Heart left ventricle (tissue), 16 donors: ENCODE measurements at regions of chr7 and their contacts with region 1.

Region 1: GRCh38 chr7:157336383-157337315 is at the start of gene DNAJB6:
- DNase-seq: peak; percentile 94 to 98 (median 95)
- ATAC-seq: peak; percentile 76 to 92 (median 88)
- H3K4me3 ChIP-seq: peak within 1 kb of the TSS; percentile 46 to 99 (median 81)
- H3K27ac ChIP-seq: peak within 1 kb of the TSS; percentile 88 to 100 (median 97)
- H3K4me1 ChIP-seq: peaks cover 7 to 49% (median 32%) of the 10 kb centered on the region in 12 donors
- H3K27me3 ChIP-seq: no peaks in the 10 kb centered on the region
- CTCF ChIP-seq: no peak
- POLR2A ChIP-seq: peak; percentile 78 to 95
- total RNA-seq, gene DNAJB6: 123 to 195 (median 162) TPM

Region 2: DNA sequence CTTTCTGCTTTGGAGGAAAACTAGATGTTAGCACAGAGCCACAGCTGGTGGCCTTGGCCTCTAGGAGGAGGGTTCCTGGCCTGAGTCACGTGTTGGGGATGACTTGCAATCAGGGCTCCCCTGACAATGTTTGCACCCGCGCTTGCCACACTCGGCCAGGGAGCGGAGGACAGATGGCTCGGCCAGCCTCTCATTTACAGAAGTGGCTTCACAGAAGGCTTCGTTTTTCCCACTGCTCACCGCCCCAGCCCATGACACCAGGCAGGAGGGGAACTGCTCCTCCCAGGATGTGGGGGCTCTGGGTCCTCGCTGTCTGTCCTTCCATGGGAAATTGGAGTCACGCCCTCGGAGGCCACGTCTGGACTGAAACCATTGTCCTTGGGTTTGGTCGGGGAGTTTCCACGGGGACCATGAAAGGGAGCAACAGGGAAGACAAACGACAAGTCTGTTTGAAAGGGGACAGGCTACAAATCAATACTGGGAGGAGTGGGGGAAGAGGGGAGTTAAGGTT is 247.5 kb before region 1 on chr7:
- intact Hi-C with region 1: no loop called
- DNase-seq: no peak
- ATAC-seq: no peak
- H3K4me3 ChIP-seq: no peak overlapping the region
- H3K27ac ChIP-seq: no peak overlapping the region
- H3K4me1 ChIP-seq: no peaks in the 10 kb centered on the region
- H3K27me3 ChIP-seq: peaks cover 0 to 9% (median 0%) of the 10 kb centered on the region in 9 donors
- CTCF ChIP-seq: no peak
- POLR2A ChIP-seq: no peak

Region 3: GRCh38 chr7:157139810-157140510 is 196.7 kb before region 1 on chr7:
- intact Hi-C with region 1: loop called in 1 of 10 experiments (anchors 10 kb)
- DNase-seq: no peak
- ATAC-seq: no peak
- H3K4me3 ChIP-seq: peak overlapping the region; percentile 60 to 97 (median 78)
- H3K27ac ChIP-seq: peak overlapping the region; percentile 85 to 96 (median 92)
- H3K4me1 ChIP-seq: peaks cover 10 to 60% (median 32%) of the 10 kb centered on the region in 12 donors
- H3K27me3 ChIP-seq: no peaks in the 10 kb centered on the region
- CTCF ChIP-seq: no peak
- POLR2A ChIP-seq: no peak

Region 4: GRCh38 chr7:157165987-157166386 is 170.7 kb before region 1 on chr7:
- intact Hi-C with region 1: no loop called
- DNase-seq: no peak
- ATAC-seq: no peak
- H3K4me3 ChIP-seq: no peak overlapping the region
- H3K27ac ChIP-seq: no peak overlapping the region
- H3K4me1 ChIP-seq: no peaks in the 10 kb centered on the region
- H3K27me3 ChIP-seq: no peaks in the 10 kb centered on the region
- CTCF ChIP-seq: no peak
- POLR2A ChIP-seq: no peak

Region 5: DNA sequence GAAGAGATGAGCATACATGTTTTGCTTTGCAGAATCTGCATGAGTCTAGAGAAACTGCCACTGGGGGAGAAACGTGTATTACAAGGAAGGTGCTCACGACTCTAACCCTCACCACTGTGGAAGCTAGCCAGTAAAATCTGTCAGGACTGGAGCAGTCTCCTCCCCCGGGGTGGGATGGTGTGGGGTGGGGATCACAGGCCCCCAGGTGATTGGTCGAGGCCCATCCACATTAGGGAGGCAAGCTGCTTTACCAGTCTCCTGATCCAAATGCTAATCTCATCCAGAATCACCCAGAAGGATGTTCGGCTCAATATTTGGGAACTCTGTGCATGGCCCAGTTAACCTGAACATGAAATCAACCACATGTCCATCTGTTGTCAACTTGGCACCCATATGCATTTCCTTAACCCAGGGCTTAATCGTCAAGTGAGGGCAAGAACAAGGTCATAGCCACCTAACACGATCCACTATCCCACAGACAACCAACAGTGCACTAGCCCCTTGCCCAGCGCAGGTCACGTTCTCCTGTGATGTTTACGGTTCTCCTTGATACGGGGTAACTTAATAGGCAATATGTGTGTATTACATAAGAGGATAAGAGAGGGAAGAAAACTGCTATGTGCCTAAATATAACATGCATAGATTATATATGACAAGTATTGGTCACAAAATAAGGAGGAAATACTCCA is 40.9 kb after region 1 on chr7:
- intact Hi-C with region 1: loop called in 1 of 10 experiments (anchors 5 kb)
- DNase-seq: no peak
- ATAC-seq: peak in 3 of 4 donors; percentile 19 to 25 (median 24)
- H3K4me3 ChIP-seq: no peak overlapping the region
- H3K27ac ChIP-seq: peak overlapping the region in 1 of 12 donors; percentile 13
- H3K4me1 ChIP-seq: peaks cover 0 to 73% (median 33%) of the 10 kb centered on the region in 12 donors
- H3K27me3 ChIP-seq: no peaks in the 10 kb centered on the region
- CTCF ChIP-seq: no peak
- POLR2A ChIP-seq: no peak

Region 6: GRCh38 chr7:157386979-157387800 is 50.5 kb after region 1 on chr7:
- intact Hi-C with region 1: loop called in 4 of 10 experiments (anchors 2 to 5 kb)
- DNase-seq: peak; percentile 85 to 92 (median 90)
- ATAC-seq: peak; percentile 85 to 90 (median 87)
- H3K4me3 ChIP-seq: peak overlapping the region in 1 of 12 donors; percentile 13
- H3K27ac ChIP-seq: peak overlapping the region; percentile 33 to 87 (median 58)
- H3K4me1 ChIP-seq: peaks cover 0 to 49% (median 36%) of the 10 kb centered on the region in 12 donors
- H3K27me3 ChIP-seq: no peaks in the 10 kb centered on the region
- CTCF ChIP-seq: peak; percentile 85 to 96 (median 92)
- POLR2A ChIP-seq: no peak

Region 7: DNA sequence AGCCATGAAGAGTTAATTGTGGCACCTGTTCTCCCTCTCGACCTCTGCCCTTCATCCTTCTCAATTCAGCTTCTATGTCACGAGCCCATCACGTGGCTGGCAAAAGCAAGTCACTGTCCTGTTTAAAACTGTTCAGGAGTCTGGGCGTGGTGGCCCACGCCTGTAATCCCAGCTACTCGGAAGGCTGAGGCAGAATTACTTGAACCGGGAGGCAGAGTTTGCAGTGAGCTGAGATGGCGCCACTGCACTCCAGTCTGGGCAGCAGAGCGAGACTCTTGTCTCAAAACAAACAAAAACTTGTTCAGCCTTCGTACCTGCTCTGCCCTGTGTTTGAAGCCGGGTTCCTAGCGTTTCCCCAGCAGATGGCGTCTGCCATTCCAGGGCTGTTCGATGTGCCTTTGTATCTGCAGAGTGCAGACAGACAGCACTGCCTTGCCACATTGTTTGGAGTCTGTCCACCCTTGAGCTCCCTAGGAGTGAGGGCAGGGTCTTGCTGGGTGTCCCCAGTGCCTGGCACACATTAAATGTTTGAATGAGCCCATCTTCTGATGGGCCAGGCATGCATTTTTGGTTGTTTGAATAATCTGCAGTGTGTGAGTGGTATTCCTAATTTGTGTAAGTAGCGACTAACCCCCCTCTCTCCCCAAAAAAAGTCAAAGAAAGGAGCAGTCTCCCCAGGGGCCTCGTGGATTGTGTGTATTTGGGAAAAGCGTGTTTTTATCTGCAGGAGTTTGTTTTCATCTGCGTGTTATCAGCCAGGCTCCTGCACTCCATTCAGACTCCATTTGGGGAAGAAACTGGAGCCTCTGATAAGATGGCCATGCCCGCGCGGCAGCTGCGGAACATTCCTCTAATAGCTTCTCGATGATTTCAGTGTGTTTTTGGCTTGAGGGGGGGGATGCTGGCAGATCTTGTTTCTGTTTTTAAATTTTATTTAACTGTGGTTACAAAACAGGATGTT is 61.4 kb after region 1 on chr7:
- intact Hi-C with region 1: loop called in 1 of 10 experiments (anchors 5 kb)
- DNase-seq: peak in 4 of 5 donors; percentile 43 to 72 (median 64)
- ATAC-seq: peak; percentile 68 to 81 (median 76)
- H3K4me3 ChIP-seq: peak overlapping the region in 5 of 12 donors; percentile 0 to 17 (median 9)
- H3K27ac ChIP-seq: peak overlapping the region; percentile 59 to 97 (median 80)
- H3K4me1 ChIP-seq: peaks cover 0 to 70% (median 31%) of the 10 kb centered on the region in 12 donors
- H3K27me3 ChIP-seq: no peaks in the 10 kb centered on the region
- CTCF ChIP-seq: peak; percentile 15 to 65 (median 42)
- POLR2A ChIP-seq: no peak